ENCODE measurements at regions of chr4 and their contacts with region 1.

Region 1: GRCh38 chr4:185071236-185071811 is 53.0 kb downstream of the HELT start:
- DNase-seq: no peak
- ATAC-seq: no peak
- H3K4me3 ChIP-seq: no peak overlapping the region
- H3K27ac ChIP-seq: no peak overlapping the region
- H3K4me1 ChIP-seq: no peaks in the 10 kb centered on the region
- H3K27me3 ChIP-seq: 0 out of 5 replicates have a peak, but pooled peaks cover 0 to 10% of the 10 kb centered on the region in 2 experiments
- CTCF ChIP-seq: no peak
- EP300 ChIP-seq: no peak
- POLR2A ChIP-seq: no peak
- RAD21 ChIP-seq: no peak

Region 2: DNA sequence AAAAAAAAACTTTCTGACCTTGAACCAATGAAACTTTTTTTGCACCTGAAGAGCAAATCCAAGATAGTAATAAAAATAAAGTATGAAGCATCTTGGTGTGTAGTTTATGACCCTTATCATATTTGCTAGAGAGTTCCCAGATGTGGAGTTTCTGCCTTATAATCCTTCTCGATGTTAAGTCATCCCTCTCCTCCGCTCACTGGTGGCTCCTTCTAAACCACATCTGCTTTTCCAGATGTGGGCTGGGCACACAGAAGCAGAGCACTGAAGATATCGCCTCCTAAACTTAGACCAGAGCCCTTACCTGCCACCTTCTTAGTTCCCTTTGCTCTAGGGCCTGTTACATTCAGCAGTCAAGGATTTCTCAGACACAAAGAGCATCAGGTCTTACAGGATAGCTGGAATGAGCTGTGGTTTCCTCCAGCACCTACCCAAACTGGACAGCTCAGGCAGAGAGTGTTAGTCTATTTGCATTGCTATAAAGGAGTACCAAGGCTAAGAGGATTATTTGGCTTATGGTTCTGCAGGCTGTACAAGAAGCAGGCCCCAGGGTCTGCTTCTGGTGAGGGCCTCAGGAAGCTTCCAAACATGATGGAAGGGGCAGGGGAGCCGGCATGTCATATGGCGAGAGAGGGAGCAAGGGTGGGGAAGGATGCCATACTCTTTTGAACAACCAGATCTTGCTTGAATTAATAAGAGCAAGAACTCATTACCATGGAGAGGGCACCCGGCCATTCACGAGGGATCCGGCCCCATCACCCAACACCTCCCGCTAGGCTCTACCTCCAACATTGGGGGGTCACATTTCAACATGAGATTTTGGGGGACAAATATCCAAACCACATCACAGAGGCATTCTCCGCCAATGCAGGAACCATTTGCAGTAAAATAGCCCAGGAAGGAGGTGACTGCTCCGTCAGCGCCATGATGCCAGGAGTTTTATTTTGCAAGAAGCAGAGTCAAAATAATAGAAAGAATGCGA is 128.6 kb before region 1 on chr4:
- CTCF ChIA-PET with region 1: no interaction called
- POLR2A ChIA-PET with region 1: no interaction called
- in situ Hi-C with region 1: no loop called
- intact Hi-C with region 1: loop called (anchors 10 kb)
- DNase-seq: no peak
- ATAC-seq: no peak
- H3K4me3 ChIP-seq: no peak overlapping the region
- H3K27ac ChIP-seq: no peak overlapping the region
- H3K4me1 ChIP-seq: peaks cover under 1% of the 10 kb centered on the region; the same call in 1 of the 2 replicates
- H3K27me3 ChIP-seq: peaks cover 0 to 3% of the 10 kb centered on the region in 2 experiments; a peak in 1 of 5 replicates
- CTCF ChIP-seq: no peak
- EP300 ChIP-seq: no peak
- POLR2A ChIP-seq: no peak
- RAD21 ChIP-seq: no peak

Region 3: GRCh38 chr4:185183619-185184281 is 112.4 kb after region 1 on chr4:
- CTCF ChIA-PET with region 1: no interaction called
- POLR2A ChIA-PET with region 1: no interaction called
- in situ Hi-C with region 1: no loop called
- intact Hi-C with region 1: no loop called
- DNase-seq: peak; percentile 79
- ATAC-seq: peak; percentile 78
- H3K4me3 ChIP-seq: no peak overlapping the region
- H3K27ac ChIP-seq: no peak overlapping the region
- H3K4me1 ChIP-seq: no peaks in the 10 kb centered on the region; the same call in 1 of the 2 replicates
- H3K27me3 ChIP-seq: no peaks in the 10 kb centered on the region; a peak in 1 of 5 replicates
- CTCF ChIP-seq: peak; percentile 70
- EP300 ChIP-seq: no peak
- POLR2A ChIP-seq: no peak
- RAD21 ChIP-seq: no peak